CD4-positive, alpha-beta memory T cell (primary cell): ENCODE measurements at regions of chr16 and their contacts with region 1.

Region 1: GRCh38 chr16:53323924-53324323 is 110.3 kb upstream of the RBL2 start:
- DNase-seq: no peak
- H3K4me3 ChIP-seq: no peak overlapping the region
- H3K4me3 Mint-ChIP-seq: no peak overlapping the region
- H3K27ac ChIP-seq: no peak overlapping the region
- H3K27ac Mint-ChIP-seq: peak overlapping the region in 2 of 7 donors; percentile 20 to 25
- H3K4me1 ChIP-seq: no peaks in the 10 kb centered on the region
- H3K4me1 Mint-ChIP-seq: no peaks in the 10 kb centered on the region
- H3K27me3 ChIP-seq: no peaks in the 10 kb centered on the region
- H3K27me3 Mint-ChIP-seq: no peaks in the 10 kb centered on the region

Region 2: GRCh38 chr16:53509906-53510703 is 186.2 kb after region 1 on chr16:
- CTCF ChIA-PET with region 1: interaction called, 3 read pairs
- POLR2A ChIA-PET with region 1: no interaction called
- intact Hi-C with region 1: loop called (anchors 5 kb)
- DNase-seq: peak in 4 of 5 donors; percentile 55 to 60 (median 58)
- H3K4me3 ChIP-seq: peak overlapping the region in 1 of 2 donors; percentile 2
- H3K4me3 Mint-ChIP-seq: peak overlapping the region in 7 of 8 donors; percentile 39 to 75 (median 62)
- H3K27ac ChIP-seq: no peak overlapping the region
- H3K27ac Mint-ChIP-seq: peak overlapping the region in 6 of 7 donors; percentile 17 to 79 (median 60)
- H3K4me1 ChIP-seq: peaks cover 26% of the 10 kb centered on the region
- H3K4me1 Mint-ChIP-seq: peaks cover 26 to 53% (median 39%) of the 10 kb centered on the region in 4 donors
- H3K27me3 ChIP-seq: no peaks in the 10 kb centered on the region
- H3K27me3 Mint-ChIP-seq: no peaks in the 10 kb centered on the region